ENCODE measurements at regions of chr12 and their contacts with region 1.

Region 1: GRCh38 chr12:29581631-29582030 is 84.1 kb upstream of the OVCH1 start:
- DNase-seq: peak; percentile 91
- ATAC-seq: peak; percentile 87
- H3K4me3 ChIP-seq: peak overlapping the region; percentile 47; the same call in 1 of the 2 replicates
- H3K27ac ChIP-seq: peak overlapping the region; percentile 87
- H3K4me1 ChIP-seq: peaks cover 52% of the 10 kb centered on the region
- H3K27me3 ChIP-seq: no peaks in the 10 kb centered on the region
- CTCF ChIP-seq: no peak

Region 2: DNA sequence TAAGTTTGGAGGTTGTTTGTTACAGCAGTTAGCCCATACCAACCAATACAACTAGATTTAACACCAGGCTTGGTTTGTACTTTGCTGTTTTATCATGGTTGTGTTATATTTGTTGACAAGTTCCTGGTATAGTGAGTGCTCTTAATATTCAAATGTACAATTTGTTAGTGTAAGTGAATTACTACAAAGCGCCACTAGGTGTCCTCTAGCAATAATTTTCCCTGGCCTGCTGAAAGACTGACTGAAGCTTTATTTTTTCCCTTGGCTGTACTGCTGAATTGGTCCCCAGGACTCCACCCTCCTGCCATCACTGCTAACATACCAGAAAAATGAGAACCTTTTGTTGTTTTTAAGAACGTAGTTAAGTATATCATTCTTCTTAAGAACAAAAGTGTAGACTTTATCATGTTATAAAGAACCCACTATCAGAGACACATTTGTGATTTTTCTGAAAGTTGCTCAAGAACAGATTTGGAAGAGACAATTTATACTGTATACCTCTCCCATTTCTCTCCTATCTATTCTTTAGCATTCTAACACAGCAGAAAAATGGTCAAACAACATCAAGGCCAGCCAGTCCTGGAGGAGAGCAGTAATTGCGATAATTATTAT is 507.9 kb before region 1 on chr12:
- CTCF ChIA-PET with region 1: no interaction called
- POLR2A ChIA-PET with region 1: no interaction called
- intact Hi-C with region 1: no loop called
- DNase-seq: peak; percentile 92
- ATAC-seq: peak; percentile 58
- H3K4me3 ChIP-seq: no peak overlapping the region
- H3K27ac ChIP-seq: peak overlapping the region; percentile 43
- H3K4me1 ChIP-seq: peaks cover 31% of the 10 kb centered on the region
- H3K27me3 ChIP-seq: no peaks in the 10 kb centered on the region
- CTCF ChIP-seq: peak; percentile 99

Region 3: GRCh38 chr12:29562167-29562776 is 19.4 kb before region 1 on chr12:
- CTCF ChIA-PET with region 1: no interaction called
- POLR2A ChIA-PET with region 1: interaction called, 3 read pairs
- intact Hi-C with region 1: loop called (anchors 1 kb)
- DNase-seq: no peak
- ATAC-seq: peak; percentile 7
- H3K4me3 ChIP-seq: no peak overlapping the region
- H3K27ac ChIP-seq: no peak overlapping the region
- H3K4me1 ChIP-seq: peaks cover 34% of the 10 kb centered on the region
- H3K27me3 ChIP-seq: peaks cover 8% of the 10 kb centered on the region
- CTCF ChIP-seq: no peak

Region 4: DNA sequence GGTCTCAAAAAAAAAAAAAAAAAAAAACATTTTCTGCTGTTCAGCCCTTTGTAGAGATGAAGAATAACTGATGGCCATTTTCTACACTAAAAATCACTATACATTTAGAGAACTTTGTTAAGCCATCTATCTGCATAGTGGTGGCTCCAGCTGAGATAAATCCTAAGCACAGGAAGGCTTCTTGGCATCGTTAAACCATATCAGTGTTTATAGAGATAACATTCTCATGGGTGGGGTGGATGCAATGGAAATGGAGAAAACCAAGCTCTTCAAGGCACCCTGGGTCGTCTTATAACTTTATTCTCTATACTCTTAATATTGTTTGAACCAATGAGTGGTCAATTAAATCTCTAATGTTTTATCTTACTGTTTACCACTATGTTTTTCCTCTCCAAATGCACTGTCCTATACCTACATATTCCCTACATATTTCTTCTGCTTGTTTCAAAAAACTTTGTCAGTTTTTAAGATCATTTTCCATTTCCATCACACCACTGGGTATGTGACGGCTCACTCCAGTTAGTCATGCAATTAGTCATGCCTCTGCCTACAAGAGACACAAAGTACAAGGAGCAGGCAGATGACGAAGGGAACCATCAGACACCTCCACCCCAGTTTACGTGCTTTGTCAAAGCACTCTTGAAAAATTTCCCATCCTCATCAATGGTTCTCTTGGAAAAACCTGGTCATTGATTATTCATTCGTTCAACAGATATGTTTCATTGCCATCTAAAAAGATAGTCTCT is 35.2 kb after region 1 on chr12:
- CTCF ChIA-PET with region 1: no interaction called
- POLR2A ChIA-PET with region 1: no interaction called
- intact Hi-C with region 1: loop called (anchors 5 kb)
- DNase-seq: peak; percentile 87
- ATAC-seq: peak; percentile 98
- H3K4me3 ChIP-seq: no peak overlapping the region
- H3K27ac ChIP-seq: peak overlapping the region; percentile 79
- H3K4me1 ChIP-seq: peaks cover 15% of the 10 kb centered on the region
- H3K27me3 ChIP-seq: no peaks in the 10 kb centered on the region
- CTCF ChIP-seq: no peak

Region 5: GRCh38 chr12:29781188-29781587 is 199.6 kb after region 1 on chr12:
- CTCF ChIA-PET with region 1: no interaction called
- POLR2A ChIA-PET with region 1: no interaction called
- intact Hi-C with region 1: no loop called
- DNase-seq: no peak
- ATAC-seq: no peak
- H3K4me3 ChIP-seq: no peak overlapping the region
- H3K27ac ChIP-seq: no peak overlapping the region
- H3K4me1 ChIP-seq: no peaks in the 10 kb centered on the region
- H3K27me3 ChIP-seq: peaks cover 41% of the 10 kb centered on the region
- CTCF ChIP-seq: no peak

Measured in PC-3 (cell line).